Psoas muscle (tissue), 8 donors: ENCODE measurements at regions of chrX and their contacts with region 1.

Region 1: DNA sequence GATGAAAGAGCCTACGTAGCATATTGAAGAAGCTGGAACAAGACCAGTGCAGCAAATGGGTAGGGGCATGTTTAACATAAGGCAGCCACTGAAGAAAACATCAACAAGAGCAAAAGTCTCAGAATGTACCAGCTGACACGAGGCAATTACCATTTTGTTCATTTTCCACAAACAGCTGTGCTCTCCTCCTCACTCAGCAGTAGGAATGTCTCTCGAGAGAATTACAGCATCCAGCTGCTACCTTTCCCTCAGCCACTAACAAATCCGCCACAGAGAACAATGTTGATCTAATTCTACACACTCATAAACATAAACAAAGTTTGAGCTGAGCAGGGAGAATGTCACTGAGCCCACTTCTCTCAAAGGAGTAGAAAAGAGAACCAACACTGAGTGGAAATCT is 68.0 kb downstream of the OPHN1 start:
- DNase-seq: no peak
- ATAC-seq: no peak
- H3K4me3 ChIP-seq: no peak overlapping the region
- H3K27ac ChIP-seq: no peak overlapping the region
- H3K4me1 ChIP-seq: no peaks in the 10 kb centered on the region
- H3K27me3 ChIP-seq: no peaks in the 10 kb centered on the region
- CTCF ChIP-seq: no peak

Region 2: GRCh38 chrX:68175562-68175961 is 189.8 kb before region 1 on chrX:
- intact Hi-C with region 1: no loop called
- DNase-seq: no peak
- ATAC-seq: peak in 3 of 4 donors; percentile 28 to 58 (median 33)
- H3K4me3 ChIP-seq: no peak overlapping the region
- H3K27ac ChIP-seq: no peak overlapping the region
- H3K4me1 ChIP-seq: no peaks in the 10 kb centered on the region
- H3K27me3 ChIP-seq: no peaks in the 10 kb centered on the region
- CTCF ChIP-seq: no peak

Region 3: DNA sequence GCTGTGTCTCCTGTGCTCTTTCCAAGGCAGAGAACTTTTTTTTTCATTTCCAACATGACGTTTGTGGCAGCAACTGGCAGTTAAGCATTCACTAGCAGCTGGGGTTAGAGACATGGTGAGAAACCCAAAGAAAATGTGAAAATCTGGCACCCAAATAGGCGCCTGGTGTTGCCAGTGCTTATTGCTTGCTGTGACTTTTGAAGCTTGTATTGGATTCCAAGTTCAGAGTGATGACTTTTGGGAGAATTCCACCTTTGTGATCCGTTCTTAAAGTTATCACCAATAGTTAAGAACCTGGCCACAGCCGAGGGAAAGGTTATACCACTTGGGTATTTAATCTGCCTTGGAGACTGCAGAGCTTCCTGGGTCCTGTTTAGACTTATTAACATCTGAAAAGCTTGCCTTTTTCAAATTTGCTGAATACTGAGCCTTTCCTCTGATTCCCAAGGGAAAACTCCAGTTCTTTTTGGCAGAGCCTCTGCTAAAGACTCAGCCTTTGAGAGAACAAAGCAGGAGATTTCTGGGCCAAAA is 33.1 kb before region 1 on chrX:
- intact Hi-C with region 1: loop called in 1 of 2 experiments (anchors 1 kb)
- DNase-seq: no peak
- ATAC-seq: no peak
- H3K4me3 ChIP-seq: no peak overlapping the region
- H3K27ac ChIP-seq: no peak overlapping the region
- H3K4me1 ChIP-seq: no peaks in the 10 kb centered on the region
- H3K27me3 ChIP-seq: no peaks in the 10 kb centered on the region
- CTCF ChIP-seq: no peak